ENCODE measurements at regions of chr12 and their contacts with region 1.

Region 1: DNA sequence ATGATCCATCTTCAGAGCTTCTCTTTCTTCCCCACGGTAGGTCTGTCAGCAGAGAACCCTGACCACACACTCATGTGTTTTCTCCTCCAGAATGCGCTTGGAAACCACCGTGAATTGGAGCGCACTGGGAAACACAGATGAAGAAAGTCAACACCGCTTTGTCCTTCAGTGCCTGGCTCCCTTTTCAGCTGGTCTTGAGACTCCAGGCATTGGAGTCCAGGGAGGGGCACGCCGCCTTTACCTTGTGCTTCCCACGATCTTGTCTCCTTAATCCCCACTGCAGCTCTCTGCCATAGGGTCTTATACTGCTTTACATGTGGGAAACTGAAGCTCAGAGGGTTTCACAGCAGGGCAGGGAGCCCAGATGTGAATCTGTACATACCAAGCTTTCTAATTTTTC is 1.1 kb downstream of the FAM90A1 start:
- DNase-seq: no peak
- ATAC-seq: no peak
- H3K4me3 ChIP-seq: no peak overlapping the region
- H3K27ac ChIP-seq: no peak overlapping the region
- H3K4me1 ChIP-seq: peaks cover 0 to 15% (median 0%) of the 10 kb centered on the region in 9 donors
- H3K27me3 ChIP-seq: peaks cover 0 to 5% (median 0%) of the 10 kb centered on the region in 7 donors
- CTCF ChIP-seq: no peak

Region 2: DNA sequence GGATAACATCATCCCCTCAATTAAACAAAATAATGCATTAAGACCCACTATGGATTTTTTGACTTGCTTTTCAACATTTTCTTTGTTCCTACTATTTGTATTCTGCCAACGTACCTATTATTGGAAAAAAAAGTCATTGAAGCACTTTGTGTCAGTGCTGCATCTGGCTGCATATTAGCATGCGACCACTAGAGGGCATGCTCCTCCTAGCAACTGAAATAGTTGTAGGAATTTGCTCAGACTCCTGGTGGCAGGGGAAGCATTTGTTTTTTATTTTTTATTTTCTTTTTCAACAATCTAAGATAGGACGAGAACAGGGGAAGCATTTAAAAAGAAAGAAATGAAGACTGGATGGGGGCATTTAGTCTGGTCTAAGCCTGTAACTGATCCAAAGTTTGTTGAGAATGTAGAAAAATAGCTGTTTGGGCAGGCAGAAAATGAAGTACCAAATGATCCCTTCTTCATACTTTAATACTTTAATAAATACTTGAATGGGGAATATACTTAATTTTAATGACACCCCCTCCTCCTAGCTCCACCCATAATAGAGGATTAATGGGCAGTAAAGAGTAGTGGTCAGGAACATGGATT is 117.5 kb before region 1 on chr12:
- intact Hi-C with region 1: loop called in 6 of 10 experiments (anchors 5 to 10 kb)
- DNase-seq: peak; percentile 60 to 73
- ATAC-seq: peak in 6 of 8 donors; percentile 63 to 81 (median 67)
- H3K4me3 ChIP-seq: no peak overlapping the region
- H3K27ac ChIP-seq: no peak overlapping the region
- H3K4me1 ChIP-seq: peaks cover 0 to 6% (median 0%) of the 10 kb centered on the region in 9 donors
- H3K27me3 ChIP-seq: no peaks in the 10 kb centered on the region
- CTCF ChIP-seq: peak in 8 of 9 donors; percentile 96 to 99 (median 98)

Measured in heart right ventricle (tissue), 16 donors.